ENCODE measurements at regions of chr5 and their contacts with region 1.

Region 1: DNA sequence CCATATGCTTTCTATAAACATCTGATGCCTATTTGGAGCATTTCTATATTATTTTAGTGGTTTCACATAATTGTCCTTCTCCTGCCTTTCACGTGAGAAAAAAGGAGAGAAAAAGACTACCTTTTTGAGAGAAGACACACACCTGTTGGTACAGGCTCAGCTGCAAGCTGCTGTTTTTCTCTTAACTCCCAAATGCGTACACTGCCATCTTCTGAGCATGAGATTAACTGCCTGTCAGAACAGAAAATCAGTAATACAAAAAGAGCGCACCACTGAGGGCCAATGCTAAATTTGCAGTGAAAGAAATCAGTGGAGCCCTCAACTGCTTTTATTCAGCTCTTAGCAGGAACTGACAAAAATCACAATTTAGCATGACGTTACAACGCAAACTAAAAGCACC is 54.9 kb downstream of the WDR41 start:
- DNase-seq: no peak
- H3K4me3 ChIP-seq: no peak overlapping the region
- H3K27ac ChIP-seq: no peak overlapping the region
- H3K4me1 ChIP-seq: no peaks in the 10 kb centered on the region
- H3K27me3 ChIP-seq: no peaks in the 10 kb centered on the region
- CTCF ChIP-seq: peak; percentile 36

Region 2: DNA sequence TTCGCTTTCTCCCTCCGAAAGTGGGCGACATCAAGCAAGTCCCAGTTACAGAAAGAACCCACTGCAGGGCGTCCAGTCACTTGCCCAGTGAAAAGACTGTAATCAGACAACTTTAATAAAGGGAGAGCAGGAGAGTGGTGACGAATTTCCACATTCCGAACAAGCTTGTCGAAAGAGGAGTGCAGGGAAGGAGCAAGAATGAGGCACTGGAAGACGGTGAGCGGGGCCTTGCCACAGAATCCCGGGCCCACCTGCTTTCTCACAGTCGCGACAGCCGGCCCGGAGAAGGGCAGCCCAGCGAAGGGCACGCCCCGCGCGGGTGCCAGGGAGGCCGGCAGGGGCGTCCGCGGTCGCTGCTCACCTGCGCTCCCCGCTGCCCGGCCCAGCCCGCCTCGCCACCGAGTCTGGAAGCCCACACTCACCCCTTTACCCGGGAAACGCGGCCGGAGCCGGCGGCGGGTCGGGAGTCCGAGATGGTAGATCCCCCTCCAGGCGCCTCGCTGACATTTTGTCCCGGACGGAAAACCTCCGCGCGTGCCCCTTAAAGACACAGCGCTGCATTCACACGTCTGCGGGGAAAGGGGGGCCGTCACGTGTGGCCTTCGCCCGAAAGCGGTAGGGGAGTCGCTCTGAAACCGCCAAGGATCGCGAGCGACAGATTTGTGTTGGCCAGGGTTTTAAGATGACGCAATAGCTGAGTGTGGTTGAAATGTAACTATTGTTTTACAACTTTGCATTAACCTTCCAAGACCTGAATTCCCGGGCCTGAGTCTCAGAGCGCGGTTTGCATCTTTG is 350.3 kb before region 1 on chr5 and contains the start of gene ZBED3:
- CTCF ChIA-PET with region 1: no interaction called
- POLR2A ChIA-PET with region 1: no interaction called
- intact Hi-C with region 1: loop called (anchors 5 kb)
- DNase-seq: peak; percentile 66 to 73
- H3K4me3 ChIP-seq: peak within 1 kb of the TSS; percentile 65
- H3K27ac ChIP-seq: peak within 1 kb of the TSS; percentile 86
- H3K4me1 ChIP-seq: peaks cover 20% of the 10 kb centered on the region
- H3K27me3 ChIP-seq: no peaks in the 10 kb centered on the region
- CTCF ChIP-seq: no peak; the same call in 1 of the 2 replicates
- total RNA-seq, gene ZBED3: 6.1 and 12.3 TPM in 2 replicates

Region 3: DNA sequence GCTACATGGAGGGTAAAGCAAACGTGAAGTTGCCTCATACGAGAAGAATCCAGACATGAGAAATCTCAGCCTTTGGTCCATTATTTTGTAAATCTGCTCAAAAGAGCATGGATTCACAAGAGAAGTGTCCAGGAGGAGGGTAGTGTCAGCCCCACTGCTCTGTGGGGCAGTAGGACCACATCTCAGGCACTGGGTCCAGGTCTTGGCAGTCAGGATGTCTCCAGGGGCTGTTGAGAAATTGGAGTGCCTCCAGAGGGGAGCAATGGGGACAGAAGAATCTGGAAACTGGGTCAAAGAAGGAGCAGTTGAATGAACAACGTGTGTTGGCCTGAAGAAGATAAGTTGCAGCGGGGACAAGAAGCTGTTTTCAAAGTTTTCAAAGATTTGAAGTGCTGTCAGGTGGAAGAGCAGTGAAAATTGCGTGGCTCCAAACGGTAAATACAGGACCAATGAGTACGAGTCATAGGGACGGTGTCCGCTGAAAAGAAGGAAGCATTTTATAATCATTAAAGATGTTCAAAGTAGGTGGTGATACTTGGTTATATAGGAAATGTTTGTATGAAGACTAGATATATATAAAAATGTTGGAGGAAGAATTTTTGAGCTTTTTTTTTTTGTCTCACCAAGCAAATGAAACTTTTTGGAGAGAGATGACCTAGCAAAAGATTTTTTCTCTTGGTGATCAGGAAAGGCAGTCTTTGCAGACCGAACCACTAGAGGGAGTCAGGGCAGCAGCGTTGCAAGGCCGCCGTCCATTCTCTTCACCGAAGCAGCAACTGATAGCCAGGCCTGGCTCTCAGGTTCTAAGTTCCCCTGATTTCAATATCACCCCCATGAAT is 293.0 kb before region 1 on chr5:
- CTCF ChIA-PET with region 1: no interaction called
- POLR2A ChIA-PET with region 1: no interaction called
- intact Hi-C with region 1: loop called (anchors 1 kb)
- DNase-seq: peak; percentile 39 to 56
- H3K4me3 ChIP-seq: no peak overlapping the region
- H3K27ac ChIP-seq: no peak overlapping the region
- H3K4me1 ChIP-seq: no peaks in the 10 kb centered on the region
- H3K27me3 ChIP-seq: no peaks in the 10 kb centered on the region
- CTCF ChIP-seq: peak; percentile 86